Breast epithelium (tissue), 4 donors: ENCODE measurements at regions of chr22 and their contacts with region 1.

Region 1: GRCh38 chr22:17283423-17283822 is 64.2 kb upstream of the ADA2 start:
- DNase-seq: no peak
- H3K4me3 ChIP-seq: no peak overlapping the region
- H3K27ac ChIP-seq: no peak overlapping the region
- H3K4me1 ChIP-seq: no peaks in the 10 kb centered on the region
- H3K27me3 ChIP-seq: peaks cover 0 to 8% of the 10 kb centered on the region in 2 donors
- CTCF ChIP-seq: no peak
- POLR2A ChIP-seq: no peak

Region 2: GRCh38 chr22:17368554-17369438 is 85.4 kb after region 1 on chr22:
- intact Hi-C with region 1: loop called (anchors 2 kb)
- DNase-seq: peak in 1 of 2 donors; percentile 58
- H3K4me3 ChIP-seq: peak overlapping the region; percentile 26 to 69 (median 54)
- H3K27ac ChIP-seq: peak overlapping the region in 1 of 2 donors; percentile 23
- H3K4me1 ChIP-seq: peaks cover 0 to 4% of the 10 kb centered on the region in 2 donors
- H3K27me3 ChIP-seq: peaks cover 7 to 67% of the 10 kb centered on the region in 2 donors
- CTCF ChIP-seq: no peak
- POLR2A ChIP-seq: no peak